GM10248 (cell line): ENCODE measurements at regions of chr7 and their contacts with region 1.

Region 1: DNA sequence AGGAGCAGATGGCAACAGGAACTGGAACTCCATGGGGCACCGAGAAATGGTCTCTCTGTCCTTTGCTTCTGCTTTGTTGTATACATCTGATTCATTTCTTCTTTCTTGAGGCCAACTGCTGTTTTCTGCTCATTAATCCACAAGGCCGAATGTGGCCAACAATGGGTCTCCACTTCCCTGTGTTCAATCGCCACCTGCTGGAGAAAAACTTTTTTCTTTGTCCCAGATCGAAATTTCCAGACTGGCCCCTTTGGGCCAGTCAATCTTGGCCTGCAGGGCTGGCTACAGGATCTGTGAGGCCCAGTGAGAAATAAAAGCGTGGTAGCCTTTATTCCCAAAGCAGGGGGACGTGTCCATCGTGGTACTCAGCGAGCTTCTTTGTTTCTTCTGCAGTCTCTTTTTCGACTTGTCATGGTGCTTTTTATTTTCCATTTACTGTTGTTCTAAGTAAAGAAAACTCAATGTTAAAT is 58.8 kb downstream of the PARP12 start:
- DNase-seq: peak; percentile 73
- CTCF ChIP-seq: peak; percentile 32

Region 2: GRCh38 chr7:139431010-139431409 is 572.9 kb before region 1 on chr7:
- CTCF ChIA-PET with region 1: interaction called, 42 read pairs
- POLR2A ChIA-PET with region 1: no interaction called
- DNase-seq: no peak
- CTCF ChIP-seq: no peak

Region 3: DNA sequence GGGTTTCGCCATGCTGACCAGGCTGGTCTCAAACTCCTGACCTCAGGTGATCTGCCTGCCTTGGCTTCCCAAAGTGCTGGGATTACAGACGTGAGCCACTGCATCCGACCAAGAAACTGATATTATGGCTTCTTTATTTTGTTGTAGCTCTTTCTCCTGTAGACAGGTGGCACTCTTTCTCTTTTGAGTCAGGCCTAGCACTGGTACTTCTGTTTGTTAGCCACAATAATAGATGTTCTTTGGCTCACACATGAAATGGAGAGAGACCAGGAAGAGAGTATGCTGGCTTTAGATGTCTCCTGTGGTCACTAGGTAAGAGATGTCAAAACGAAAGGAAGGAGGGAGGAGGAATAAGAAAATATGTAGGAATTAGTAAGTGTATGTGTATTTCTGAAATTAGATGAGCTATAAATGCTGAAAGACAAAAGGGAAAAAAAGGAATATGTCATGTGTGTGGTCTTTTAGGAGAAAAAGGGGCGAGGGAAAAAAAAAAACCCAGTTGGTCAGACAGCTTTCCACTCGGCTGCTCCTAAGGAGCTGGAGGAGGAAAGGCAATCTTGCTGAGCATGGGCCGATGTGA is 401.7 kb before region 1 on chr7:
- CTCF ChIA-PET with region 1: interaction called, 14 read pairs
- POLR2A ChIA-PET with region 1: no interaction called
- DNase-seq: peak; percentile 41
- CTCF ChIP-seq: peak; percentile 47

Region 4: GRCh38 chr7:139673230-139673629 is 330.7 kb before region 1 on chr7:
- CTCF ChIA-PET with region 1: no interaction called
- POLR2A ChIA-PET with region 1: no interaction called
- DNase-seq: peak; percentile 75
- CTCF ChIP-seq: no peak

Region 5: GRCh38 chr7:139745678-139746143 is 258.2 kb before region 1 on chr7:
- CTCF ChIA-PET with region 1: interaction called, 11 read pairs
- POLR2A ChIA-PET with region 1: no interaction called
- DNase-seq: no peak
- CTCF ChIP-seq: no peak

Region 6: DNA sequence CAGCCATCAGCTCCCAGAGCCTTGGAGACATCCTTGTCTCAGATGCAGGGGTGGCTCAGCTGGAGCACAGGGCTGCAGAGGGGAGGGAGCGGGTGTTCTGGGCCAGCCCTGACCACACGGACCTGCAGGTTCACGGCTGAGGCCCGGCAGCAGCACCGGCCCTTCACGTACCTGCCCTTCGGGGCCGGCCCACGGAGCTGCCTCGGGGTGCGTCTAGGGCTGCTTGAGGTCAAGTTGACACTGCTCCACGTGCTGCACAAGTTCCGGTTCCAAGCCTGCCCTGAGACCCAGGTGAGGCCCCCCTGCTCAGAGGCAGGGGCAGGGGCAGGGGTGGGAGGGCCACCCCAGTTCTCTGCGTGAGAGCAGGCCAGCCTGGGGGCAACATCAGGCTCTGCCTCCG is 13.6 kb after region 1 on chr7:
- CTCF ChIA-PET with region 1: interaction called, 20 read pairs
- POLR2A ChIA-PET with region 1: no interaction called
- DNase-seq: no peak
- CTCF ChIP-seq: no peak

Region 7: GRCh38 chr7:140079121-140079536 is 75.2 kb after region 1 on chr7:
- CTCF ChIA-PET with region 1: no interaction called
- POLR2A ChIA-PET with region 1: no interaction called
- DNase-seq: no peak
- CTCF ChIP-seq: no peak